Right cardiac atrium (tissue), 5 donors: ENCODE measurements at regions of chr1 and their contacts with region 1.

Region 1: DNA sequence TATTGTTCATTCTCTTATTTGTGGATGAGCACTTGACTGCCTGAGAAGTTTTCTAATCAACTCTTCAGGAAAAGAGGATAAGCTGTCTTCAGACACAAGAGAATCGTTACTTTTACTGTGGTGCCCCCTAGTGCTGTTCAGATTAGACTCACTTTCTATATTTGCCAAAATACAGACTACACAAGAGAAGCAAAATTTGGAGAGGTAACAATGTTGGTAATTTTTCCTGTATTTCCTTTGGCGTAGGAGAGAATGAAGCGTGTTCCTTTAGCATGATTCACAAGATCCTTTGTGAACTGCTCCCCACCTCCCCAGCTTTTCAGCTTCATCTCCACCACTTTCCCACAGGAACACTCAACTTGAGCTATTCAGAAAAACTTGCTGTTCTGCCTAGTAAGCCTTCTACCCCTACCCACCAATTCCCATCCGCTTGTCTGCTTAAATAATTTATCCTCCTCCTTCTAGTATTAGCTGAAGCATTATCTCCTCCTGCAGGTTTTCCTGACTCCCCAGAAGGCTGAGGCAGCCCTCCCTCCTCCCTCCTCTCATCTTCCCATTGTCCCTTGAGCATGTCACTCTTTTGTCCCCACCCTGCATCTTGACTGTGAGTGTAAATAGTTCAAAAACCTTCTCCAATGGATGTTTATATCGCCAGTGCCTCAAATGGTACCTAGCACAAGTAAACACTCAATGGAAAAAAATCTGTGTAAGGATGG is 4.5 kb downstream of the TNFSF4 start:
- DNase-seq: no peak
- ATAC-seq: peak; percentile 57 to 75
- H3K4me3 ChIP-seq: no peak overlapping the region
- H3K27ac ChIP-seq: no peak overlapping the region
- H3K4me1 ChIP-seq: peaks cover 9% of the 10 kb centered on the region
- H3K27me3 ChIP-seq: no peaks in the 10 kb centered on the region

Region 2: DNA sequence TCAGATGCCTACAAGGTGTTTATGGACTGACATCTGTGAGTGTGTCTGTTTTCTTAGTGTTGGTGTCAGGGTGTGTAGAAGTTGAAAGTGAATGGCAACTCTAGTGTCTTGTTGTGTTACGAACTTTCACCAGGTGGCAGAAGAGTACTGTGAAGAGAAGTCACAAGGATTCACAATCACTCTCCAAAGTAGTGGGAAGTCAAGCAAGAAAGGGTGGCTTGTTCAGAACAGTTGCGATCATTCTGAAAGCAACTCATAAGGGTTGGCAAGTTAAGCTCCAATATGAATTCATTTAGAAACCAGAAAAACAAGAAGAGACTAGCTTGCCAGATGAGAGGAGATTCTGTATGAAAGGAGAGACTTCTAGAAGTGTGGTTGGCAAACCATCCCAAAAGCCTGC is 457.6 kb before region 1 on chr1:
- intact Hi-C with region 1: loop called (anchors 5 to 10 kb)
- DNase-seq: no peak
- ATAC-seq: peak; percentile 70 to 82
- H3K4me3 ChIP-seq: no peak overlapping the region
- H3K27ac ChIP-seq: no peak overlapping the region
- H3K4me1 ChIP-seq: peaks cover 5% of the 10 kb centered on the region
- H3K27me3 ChIP-seq: no peaks in the 10 kb centered on the region

Region 3: GRCh38 chr1:172826096-172826743 is 376.4 kb before region 1 on chr1:
- intact Hi-C with region 1: loop called (anchors 5 kb)
- DNase-seq: peak in 2 of 3 donors; percentile 16 to 40
- ATAC-seq: peak; percentile 89 to 92
- H3K4me3 ChIP-seq: peak overlapping the region; percentile 22
- H3K27ac ChIP-seq: peak overlapping the region; percentile 8
- H3K4me1 ChIP-seq: no peaks in the 10 kb centered on the region
- H3K27me3 ChIP-seq: no peaks in the 10 kb centered on the region

Region 4: DNA sequence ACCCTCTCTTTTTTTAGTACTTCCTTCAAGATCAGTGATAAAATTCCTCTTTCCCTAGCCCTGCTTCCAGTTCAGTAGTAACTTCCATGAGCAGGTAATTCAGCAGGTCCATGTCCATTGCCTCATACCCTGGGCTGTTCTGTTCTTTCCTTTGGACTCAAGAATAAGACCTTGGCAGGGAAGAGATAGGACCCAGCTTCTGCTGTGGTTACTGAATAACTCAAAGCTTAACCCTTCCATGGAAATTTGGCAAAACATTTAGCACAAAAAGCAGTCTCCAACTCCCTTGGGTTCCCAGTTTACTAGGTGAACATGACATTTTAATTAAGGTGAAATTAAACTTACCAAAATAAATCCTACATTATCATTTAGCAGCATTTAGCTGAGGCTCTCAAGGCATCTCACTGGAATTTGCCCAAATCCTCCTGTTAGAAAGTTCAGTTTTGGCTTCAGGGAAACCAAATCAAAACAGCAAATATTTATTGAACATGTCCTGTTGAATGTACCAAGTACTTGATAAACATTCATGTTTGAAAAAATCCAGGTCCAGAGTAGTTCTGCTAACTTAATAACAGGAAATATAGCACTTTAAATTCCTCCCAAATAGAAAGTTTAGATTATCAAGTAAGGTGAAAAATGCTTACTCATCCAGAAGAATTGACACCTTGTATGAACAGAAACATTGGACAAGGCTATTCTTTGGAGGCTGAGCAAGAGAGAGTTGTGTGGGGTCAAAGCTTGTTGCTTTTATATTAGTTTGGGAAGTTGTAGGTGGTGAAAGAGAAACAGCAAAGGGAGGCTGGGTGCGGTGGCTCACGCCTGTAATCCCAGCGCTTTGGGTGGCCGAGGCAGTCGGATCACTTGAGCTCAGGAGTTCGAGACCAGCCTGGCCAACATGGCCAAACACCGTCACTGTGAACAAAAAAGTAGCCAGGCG is 723.0 kb after region 1 on chr1:
- intact Hi-C with region 1: no loop called
- DNase-seq: no peak
- ATAC-seq: no peak
- H3K4me3 ChIP-seq: no peak overlapping the region
- H3K27ac ChIP-seq: no peak overlapping the region
- H3K4me1 ChIP-seq: no peaks in the 10 kb centered on the region
- H3K27me3 ChIP-seq: no peaks in the 10 kb centered on the region